ENCODE measurements at regions of chr9 and their contacts with region 1.

Region 1: GRCh38 chr9:123081824-123082223 is 48.4 kb downstream of the GPR21 start:
- DNase-seq: no peak
- H3K4me3 ChIP-seq: no peak overlapping the region
- H3K27ac ChIP-seq: no peak overlapping the region
- H3K27me3 ChIP-seq: no peaks in the 10 kb centered on the region
- CTCF ChIP-seq: peak; percentile 36 to 76 (median 60)

Region 2: DNA sequence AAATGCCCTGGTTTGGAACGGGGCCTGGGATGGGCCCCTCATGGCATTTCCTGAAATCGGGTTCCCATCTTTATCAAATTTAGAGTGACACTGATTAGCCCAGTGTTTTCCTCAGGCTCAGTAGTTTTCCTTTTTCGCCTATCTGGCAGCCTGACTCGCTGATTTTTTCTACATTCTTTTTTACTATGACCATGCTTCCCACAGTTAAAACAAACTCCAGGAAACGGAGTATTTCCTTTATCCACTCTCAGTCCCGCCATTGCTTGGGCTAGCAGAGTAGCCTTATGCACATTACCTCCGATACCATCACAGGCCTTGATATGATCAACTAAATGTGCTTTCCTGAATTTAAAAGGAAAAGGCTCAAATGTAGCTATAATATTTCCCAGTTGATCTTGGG is 461.8 kb before region 1 on chr9:
- intact Hi-C with region 1: no loop called
- DNase-seq: no peak
- H3K4me3 ChIP-seq: no peak overlapping the region
- H3K27ac ChIP-seq: no peak overlapping the region
- H3K27me3 ChIP-seq: no peaks in the 10 kb centered on the region
- CTCF ChIP-seq: no peak

Region 3: DNA sequence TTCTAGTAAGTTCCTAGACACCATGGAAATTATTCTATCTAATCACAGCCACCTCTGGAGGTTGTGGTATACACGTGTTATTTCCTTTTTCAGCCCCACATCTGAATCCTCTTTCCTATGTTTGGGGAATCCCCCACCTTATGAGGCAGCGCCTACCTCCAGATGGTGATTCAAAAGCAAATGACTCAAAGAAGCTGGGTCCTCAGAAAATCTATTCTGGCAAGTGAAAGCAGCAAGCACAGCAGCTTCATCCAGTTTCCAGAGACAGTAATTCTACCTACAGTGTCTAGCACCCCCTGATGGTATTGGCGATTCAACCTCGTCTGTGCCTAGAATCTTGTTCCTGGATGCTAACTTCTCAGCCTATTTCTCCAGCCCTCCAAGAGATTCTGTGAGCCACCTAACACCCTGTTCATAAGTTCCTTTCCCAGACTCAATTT is 143.6 kb after region 1 on chr9:
- intact Hi-C with region 1: loop called in 1 of 2 experiments (anchors 10 kb)
- DNase-seq: peak in 3 of 10 donors; percentile 25 to 55 (median 52)
- H3K4me3 ChIP-seq: no peak overlapping the region
- H3K27ac ChIP-seq: peak overlapping the region in 1 of 59 donors; percentile 19
- H3K27me3 ChIP-seq: no peaks in the 10 kb centered on the region
- CTCF ChIP-seq: peak in 54 of 56 donors; percentile 29 to 66 (median 53)